ENCODE measurements at regions of chr19 and their contacts with region 1.

Region 1: GRCh38 chr19:55632463-55632834 is 8.1 kb upstream of the ZNF784 start:
- H3K4me3 ChIP-seq: no peak overlapping the region
- H3K27ac ChIP-seq: no peak overlapping the region
- H3K4me1 ChIP-seq: peaks cover 12% of the 10 kb centered on the region
- CTCF ChIP-seq: peak; percentile 79

Region 2: DNA sequence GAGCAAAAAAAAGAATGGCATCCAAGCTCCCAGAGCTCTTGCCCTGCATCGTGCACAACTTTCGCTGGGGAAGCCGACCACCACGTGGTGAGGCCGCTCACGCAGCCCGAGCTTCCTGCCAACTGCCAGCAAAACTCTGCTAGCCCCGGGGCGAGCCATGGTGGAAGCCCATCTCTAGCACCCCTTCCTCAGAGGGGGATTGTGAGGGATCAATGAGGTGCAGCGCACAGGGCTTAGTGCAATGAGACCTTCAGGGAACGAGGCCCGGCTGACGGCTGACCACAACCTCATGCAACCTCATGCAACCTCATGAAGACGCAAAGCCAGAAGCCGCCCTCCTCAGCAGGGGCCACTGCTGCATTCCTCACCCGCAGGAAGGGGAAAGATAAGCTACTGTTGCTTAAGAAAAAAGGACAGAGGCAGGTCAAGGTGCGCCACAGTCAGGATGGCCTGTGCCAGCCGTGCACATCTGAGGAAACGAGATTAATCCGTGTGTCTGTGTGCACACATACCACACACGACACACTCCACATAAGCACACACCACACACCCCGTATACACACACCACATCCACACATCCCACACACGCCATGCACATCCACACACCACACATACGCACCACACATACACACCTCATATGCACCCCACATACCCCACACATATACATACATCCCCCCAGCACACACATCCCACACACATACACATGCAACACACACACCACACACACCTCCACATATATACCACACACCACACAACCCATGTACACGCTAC is 362.1 kb before region 1 on chr19:
- CTCF ChIA-PET with region 1: no interaction called
- POLR2A ChIA-PET with region 1: no interaction called
- H3K4me3 ChIP-seq: no peak overlapping the region
- H3K27ac ChIP-seq: no peak overlapping the region
- H3K4me1 ChIP-seq: no peaks in the 10 kb centered on the region
- CTCF ChIP-seq: no peak

Region 3: GRCh38 chr19:55467236-55468053 is 165.0 kb before region 1 on chr19:
- CTCF ChIA-PET with region 1: interaction called, 25 read pairs
- POLR2A ChIA-PET with region 1: no interaction called
- H3K4me3 ChIP-seq: no peak overlapping the region
- H3K27ac ChIP-seq: no peak overlapping the region
- H3K4me1 ChIP-seq: no peaks in the 10 kb centered on the region
- CTCF ChIP-seq: peak; percentile 91

Region 4: DNA sequence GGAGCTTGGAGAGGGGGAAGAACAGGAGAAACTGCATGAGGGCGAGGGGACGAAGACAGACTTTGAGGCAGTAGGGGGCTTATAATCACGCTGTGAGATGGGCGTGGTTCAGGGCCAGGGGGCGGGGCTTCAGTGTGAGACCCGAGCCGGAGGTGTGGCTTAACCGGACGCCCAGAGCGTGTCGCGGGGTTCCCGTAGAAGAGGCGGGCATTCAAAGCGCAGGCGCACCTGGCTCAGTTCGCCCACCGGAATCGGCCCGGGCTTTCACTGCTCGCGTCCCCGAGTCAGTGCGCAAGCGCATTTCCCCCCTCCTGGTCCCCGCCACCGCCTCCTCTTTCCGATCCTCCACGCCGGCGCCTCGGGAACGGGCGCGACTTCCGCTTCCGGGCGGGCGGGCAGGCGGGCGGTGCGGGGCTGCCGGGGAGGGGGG is 27.2 kb before region 1 on chr19:
- CTCF ChIA-PET with region 1: interaction called, 48 read pairs
- POLR2A ChIA-PET with region 1: interaction called, 4 read pairs
- H3K4me3 ChIP-seq: peak overlapping the region; percentile 97
- H3K27ac ChIP-seq: peak overlapping the region; percentile 88; the same call in 1 of the 2 replicates
- H3K4me1 ChIP-seq: peaks cover 8% of the 10 kb centered on the region; the same call in 1 of the 2 replicates
- CTCF ChIP-seq: no peak

Region 5: DNA sequence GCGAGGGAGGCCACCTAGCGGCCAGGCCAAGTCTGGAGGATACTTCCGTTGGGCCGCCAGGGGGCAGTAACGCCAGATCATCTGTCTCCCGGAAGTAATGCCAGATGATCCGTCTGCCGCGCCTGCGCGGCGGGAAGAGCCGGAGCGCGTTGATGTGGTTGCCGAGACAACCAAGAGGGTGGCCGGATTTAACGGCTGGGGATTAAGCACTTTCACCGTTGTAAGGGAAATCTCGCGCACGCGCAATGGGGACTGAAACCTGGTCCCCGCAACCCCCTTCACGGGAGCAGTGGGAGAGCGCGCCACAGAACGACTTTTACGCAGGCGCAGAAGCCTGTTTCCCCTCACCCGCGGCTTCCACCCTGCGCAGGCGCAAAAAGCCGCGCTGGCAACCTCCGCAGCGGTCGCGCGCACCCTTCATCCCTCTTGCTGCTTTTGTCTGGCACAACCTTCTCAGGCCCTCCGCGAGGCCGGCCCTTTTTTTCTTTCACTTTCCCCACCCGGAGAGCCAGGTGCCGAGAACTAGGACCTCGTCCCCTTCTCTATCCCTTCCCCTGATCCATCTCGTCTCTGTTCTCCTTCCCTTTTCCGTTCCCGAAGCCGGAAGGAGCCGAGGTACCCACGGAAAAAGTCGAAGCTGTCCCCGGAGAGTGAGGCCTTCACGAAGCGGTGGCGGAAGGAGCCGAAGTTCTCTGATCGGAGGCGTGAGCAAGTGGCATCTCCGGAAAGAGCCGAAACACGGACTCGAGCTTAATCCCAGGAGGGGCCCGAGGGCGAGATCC is 21.5 kb after region 1 on chr19:
- CTCF ChIA-PET with region 1: interaction called, 26 read pairs
- POLR2A ChIA-PET with region 1: interaction called, 22 read pairs
- H3K4me3 ChIP-seq: peak overlapping the region; percentile 55
- H3K27ac ChIP-seq: peak overlapping the region; percentile 100
- H3K4me1 ChIP-seq: peaks cover 11% of the 10 kb centered on the region
- CTCF ChIP-seq: peak; percentile 100

Region 6: DNA sequence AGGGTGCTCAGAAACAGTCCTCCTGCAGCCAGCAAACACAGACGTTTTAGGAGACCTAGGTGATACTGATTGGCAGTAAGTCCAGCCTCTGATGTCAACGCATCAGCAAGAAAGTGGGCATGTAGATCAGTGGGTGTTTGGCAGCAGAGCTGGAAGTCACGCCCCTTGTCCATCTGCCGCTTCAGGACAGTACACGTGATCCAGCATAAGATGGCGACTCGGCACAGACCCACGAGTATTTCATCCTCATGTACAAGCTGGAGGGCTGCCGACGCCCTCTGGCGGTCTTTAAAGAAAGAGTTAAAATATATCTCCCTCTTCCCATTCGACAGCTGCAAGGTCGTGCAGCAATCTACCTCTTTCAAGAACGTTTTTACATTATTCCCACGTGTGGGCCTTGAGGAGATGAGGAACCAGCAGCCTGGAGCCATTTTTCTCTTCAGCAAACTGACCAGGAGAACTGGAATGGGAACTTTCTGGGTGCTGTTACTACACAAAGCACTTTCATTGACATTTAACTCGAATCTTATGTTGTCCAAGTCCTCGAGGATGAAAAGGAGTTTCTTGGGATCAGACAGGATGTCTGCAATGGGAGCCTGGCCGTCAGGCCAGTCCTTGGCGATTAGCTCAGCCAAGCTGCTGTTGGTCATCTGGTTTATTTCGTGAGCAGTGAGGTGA is 177.1 kb after region 1 on chr19:
- CTCF ChIA-PET with region 1: interaction called, 62 read pairs
- POLR2A ChIA-PET with region 1: interaction called, 5 read pairs
- H3K4me3 ChIP-seq: no peak overlapping the region
- H3K27ac ChIP-seq: no peak overlapping the region
- H3K4me1 ChIP-seq: no peaks in the 10 kb centered on the region
- CTCF ChIP-seq: no peak

Measured in HEK293 (cell line).